GM10248 (cell line): ENCODE measurements at regions of chr2 and their contacts with region 1.

Region 1: DNA sequence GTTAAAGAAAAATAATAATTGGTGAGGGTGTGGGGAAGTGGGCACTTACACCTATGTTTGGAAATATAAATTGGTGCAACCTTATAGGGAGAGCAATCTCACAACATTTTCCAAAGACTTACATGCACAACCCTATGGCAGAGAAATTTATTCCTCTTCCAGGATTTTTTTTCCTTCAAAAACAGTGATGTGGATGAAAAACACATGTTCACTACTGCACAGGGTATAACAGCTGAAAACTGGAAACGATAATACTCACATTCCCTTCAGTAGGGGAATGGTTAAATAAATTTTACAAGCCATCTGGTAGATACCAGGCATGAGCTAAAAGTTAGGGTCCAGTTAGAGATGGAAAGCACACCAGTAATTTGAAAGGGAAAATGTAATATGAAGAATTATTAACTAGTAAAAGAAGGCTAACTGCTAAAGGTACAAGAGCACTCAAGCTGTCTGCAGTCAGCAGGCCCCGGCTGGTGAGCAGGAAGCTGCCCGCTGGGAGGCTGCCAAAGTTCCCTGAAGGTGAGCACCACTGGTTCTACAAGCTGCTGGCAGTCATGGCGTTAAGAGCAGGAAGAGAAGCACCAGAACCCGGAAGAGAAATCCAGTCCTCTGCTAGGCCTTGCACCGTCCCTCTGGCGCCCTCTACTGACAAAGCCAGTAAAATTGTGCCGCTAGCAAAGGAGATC is 28.4 kb upstream of the CASP8 start:
- DNase-seq: peak; percentile 83
- CTCF ChIP-seq: peak; percentile 83

Region 2: DNA sequence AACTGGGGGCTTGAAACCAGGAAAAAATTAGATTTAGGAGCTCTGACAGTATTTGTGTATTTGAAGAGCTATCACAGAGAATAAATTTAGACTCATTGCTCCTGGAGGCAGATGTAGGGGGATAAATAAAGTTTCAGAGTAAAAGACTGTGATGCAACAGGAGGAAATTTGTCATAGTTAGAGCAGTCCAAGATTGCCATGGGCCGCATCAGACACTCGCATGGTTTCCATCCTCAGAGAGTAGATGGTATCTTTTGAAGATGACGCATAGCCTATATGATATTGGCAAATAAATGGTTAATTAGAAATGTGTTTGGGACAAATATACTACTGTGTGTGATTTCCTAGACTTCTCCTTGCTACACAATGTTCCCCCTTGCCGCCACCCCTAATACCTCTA is 1551.4 kb before region 1 on chr2:
- CTCF ChIA-PET with region 1: no interaction called
- POLR2A ChIA-PET with region 1: no interaction called
- DNase-seq: no peak
- CTCF ChIP-seq: no peak

Region 3: GRCh38 chr2:200901459-200902072 is 330.4 kb before region 1 on chr2:
- CTCF ChIA-PET with region 1: interaction called, 92 read pairs
- POLR2A ChIA-PET with region 1: no interaction called
- DNase-seq: peak; percentile 82
- CTCF ChIP-seq: peak; percentile 64

Region 4: DNA sequence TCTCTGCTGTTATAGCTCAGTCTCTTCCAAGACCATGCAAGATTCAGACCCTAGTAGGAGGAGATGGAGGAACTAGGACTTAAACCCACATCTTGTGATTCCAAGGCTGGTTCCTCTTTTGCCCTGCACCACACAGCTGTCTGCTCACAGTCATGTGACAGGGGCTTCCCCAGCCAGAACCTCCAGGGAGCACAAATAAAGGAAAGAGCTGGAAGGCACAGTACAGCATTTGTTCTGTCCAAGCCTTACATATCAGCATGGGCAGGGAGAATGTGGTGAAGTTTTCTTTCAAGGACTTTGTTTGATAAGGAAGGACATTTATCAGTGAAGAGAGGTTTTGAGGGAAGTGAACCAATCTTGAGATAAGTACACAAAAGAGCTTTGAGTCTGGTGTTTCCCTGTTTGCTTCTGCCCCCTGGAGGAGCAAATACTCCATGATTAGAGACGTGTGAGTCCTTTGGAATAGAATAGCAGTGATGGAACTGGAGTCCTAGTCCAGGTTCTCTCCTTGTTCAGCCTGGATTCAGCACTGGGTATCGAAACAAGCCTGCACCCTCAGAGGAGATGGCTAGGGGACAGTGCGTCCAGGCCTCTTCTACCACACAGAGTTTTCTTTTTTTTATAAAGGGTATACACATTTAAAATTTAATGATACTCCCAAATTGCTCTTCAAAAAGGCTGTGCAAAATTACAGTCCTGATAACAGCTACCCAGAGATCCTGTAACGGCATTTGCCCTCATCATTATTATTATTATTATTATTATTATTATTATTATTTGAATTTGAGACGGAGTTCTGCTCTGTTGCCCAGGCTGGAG is 73.6 kb before region 1 on chr2:
- CTCF ChIA-PET with region 1: interaction called, 26 read pairs
- POLR2A ChIA-PET with region 1: no interaction called
- DNase-seq: peak; percentile 63
- CTCF ChIP-seq: peak; percentile 54

Region 5: DNA sequence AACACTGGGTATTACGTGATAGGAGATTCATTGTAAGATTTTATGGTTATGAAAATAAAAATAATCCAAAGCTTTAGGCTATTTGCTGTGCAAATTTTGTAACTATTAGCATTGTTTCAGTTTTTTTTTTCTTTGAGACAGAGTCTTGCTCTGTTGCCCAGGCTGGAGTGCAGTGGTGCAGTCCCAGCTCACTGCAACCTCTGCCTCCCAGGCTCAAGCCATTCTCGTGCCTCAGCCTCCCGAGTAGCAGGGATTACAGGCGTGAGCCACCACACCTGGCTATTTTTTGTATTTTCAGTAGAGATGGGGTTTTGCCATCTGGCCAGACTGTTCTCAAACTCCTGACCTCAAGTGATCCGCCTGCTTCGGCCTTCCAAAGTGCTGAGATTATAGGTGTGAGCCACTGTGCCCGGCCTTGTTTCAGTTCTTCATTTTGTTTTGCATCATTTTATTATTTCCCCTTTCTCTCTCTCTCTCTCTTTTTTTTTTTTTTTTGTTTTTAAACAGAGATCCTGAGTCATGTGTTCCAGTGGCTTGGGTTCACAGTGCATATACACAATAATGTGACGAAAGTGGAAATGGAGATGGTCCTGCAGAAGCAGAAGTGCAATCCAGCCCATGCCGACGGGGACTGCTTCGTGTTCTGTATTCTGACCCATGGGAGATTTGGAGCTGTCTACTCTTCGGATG is 23.2 kb before region 1 on chr2:
- CTCF ChIA-PET with region 1: interaction called, 36 read pairs
- POLR2A ChIA-PET with region 1: no interaction called
- DNase-seq: no peak
- CTCF ChIP-seq: no peak

Region 6: GRCh38 chr2:201250741-201251140 is 18.8 kb after region 1 on chr2:
- CTCF ChIA-PET with region 1: interaction called, 35 read pairs
- POLR2A ChIA-PET with region 1: no interaction called
- DNase-seq: no peak
- CTCF ChIP-seq: no peak

Region 7: DNA sequence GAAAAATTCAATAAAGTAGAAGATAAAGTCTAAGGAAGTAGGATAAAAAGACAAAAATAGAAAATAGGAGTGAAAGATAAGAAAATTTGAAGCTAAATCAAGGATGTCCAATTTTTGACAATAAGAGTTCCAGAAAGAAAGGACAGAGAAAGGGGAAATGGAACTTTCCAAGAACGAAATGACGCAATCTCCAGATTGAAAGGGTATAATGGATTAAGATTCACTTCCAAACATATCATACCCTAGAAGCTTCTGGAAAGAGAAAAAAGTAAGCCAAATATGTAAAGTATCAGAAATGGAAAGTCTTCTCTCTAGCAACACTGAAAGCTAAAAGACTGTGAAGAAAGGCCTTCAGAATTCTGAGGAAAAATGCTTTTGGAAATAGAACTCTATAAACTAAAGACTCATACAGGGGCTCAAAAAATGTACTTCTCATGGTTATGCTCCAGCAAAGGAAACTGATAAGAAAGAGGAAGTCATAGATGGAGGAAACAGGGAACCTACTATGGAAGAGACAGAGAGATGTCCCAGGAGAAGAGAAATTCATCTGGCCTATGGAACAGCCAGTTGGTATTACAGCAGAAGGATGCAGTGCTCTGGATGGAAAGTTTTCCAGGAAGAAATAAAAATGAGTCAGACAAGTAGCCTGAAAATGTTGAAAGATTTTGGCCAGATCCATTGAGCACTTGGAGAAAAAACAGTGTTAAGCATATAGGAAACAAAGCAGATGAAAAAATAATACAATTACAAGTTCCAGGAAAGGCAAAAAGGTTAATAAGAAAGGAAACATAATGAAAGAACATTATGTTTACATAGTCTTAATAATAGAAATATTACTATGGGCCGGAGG is 48.5 kb after region 1 on chr2:
- CTCF ChIA-PET with region 1: interaction called, 11 read pairs
- POLR2A ChIA-PET with region 1: no interaction called
- DNase-seq: no peak
- CTCF ChIP-seq: no peak

Region 8: GRCh38 chr2:201307876-201308275 is 76.0 kb after region 1 on chr2:
- CTCF ChIA-PET with region 1: no interaction called
- POLR2A ChIA-PET with region 1: no interaction called
- DNase-seq: no peak
- CTCF ChIP-seq: no peak